WTC11 (cell line): ENCODE measurements at regions of chr15 and their contacts with region 1.

Region 1: DNA sequence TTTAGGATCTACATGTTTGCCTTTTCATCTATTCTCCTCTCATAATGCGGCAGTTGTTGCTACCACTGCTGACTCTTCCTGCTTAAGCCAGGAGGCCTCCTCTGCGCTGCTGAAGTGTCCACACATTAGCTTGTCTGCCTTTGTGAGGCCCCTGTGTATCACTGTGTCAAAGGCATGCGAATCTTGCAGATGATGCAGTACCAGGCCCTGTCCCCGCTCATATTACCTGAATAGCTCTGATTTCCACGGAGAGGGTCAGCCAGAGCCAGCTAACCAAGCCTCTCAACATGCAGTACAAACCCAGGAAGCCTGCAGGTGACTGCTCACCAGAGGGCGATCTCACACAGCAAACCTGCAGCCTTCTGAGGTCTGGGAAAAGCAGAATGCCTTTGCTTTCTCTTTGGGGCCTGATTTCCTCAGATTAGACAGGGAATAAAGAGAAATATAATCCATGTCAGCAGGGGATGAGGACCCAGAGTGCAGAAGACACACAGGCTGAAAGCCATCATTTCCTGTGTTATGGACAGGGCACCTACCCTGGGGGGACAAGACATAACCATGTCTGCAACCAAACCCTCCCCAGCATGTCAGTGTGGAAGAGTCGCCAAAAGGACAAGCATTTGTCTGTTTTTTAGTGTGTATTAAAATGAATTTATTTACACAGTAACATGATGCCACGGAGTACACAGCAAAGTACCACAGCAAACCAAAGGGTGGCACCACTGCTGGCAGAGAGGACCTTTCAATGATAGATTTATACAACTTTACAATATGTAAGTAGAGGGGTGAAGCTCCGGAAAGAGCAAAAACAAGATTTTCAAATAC is 36.8 kb upstream of the TSPAN3 start:
- DNase-seq: peak; percentile 79
- ATAC-seq: peak; percentile 94
- H3K4me3 Mint-ChIP-seq: no peak overlapping the region
- H3K27ac Mint-ChIP-seq: peak overlapping the region; percentile 95
- H3K4me1 Mint-ChIP-seq: peaks cover 10% of the 10 kb centered on the region
- H3K27me3 Mint-ChIP-seq: no peaks in the 10 kb centered on the region
- CTCF ChIP-seq: peak; percentile 59

Region 2: DNA sequence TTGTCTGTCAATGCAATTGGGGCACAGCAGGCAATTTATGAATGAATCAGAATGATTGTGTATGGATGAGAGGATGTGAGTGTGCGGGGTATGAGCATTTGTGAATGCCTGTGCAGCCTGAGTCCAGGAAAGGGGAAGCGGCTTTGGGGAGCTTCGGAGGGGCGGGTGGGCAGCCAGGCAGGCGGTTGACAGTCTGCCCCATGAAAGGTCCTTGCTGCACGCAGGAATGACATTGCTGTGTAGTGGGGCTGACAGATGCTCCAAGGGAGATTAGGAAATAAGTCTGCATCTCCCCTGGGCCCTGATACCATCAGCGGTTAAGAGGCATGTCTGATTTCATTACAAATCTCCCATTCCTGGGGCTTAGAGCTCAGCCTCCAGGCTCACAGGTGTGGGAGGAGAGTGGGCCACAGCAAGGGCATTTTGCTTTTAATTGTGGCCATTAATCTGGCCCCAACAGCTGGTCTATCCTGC is 10.5 kb before region 1 on chr15:
- CTCF ChIA-PET with region 1: interaction called, 11 read pairs
- POLR2A ChIA-PET with region 1: no interaction called
- DNase-seq: no peak
- ATAC-seq: no peak
- H3K4me3 Mint-ChIP-seq: no peak overlapping the region
- H3K27ac Mint-ChIP-seq: no peak overlapping the region
- H3K4me1 Mint-ChIP-seq: peaks cover 6% of the 10 kb centered on the region; the same call in 1 of the 2 replicates
- H3K27me3 Mint-ChIP-seq: no peaks in the 10 kb centered on the region
- CTCF ChIP-seq: no peak

Region 3: GRCh38 chr15:77118882-77119321 is 11.2 kb after region 1 on chr15:
- CTCF ChIA-PET with region 1: interaction called, 33 read pairs
- POLR2A ChIA-PET with region 1: no interaction called
- DNase-seq: no peak
- ATAC-seq: peak; percentile 68
- H3K4me3 Mint-ChIP-seq: no peak overlapping the region
- H3K27ac Mint-ChIP-seq: no peak overlapping the region
- H3K4me1 Mint-ChIP-seq: peaks cover 28% of the 10 kb centered on the region
- H3K27me3 Mint-ChIP-seq: no peaks in the 10 kb centered on the region
- CTCF ChIP-seq: peak; percentile 35

Region 4: GRCh38 chr15:77346245-77347036 is 238.7 kb after region 1 on chr15:
- CTCF ChIA-PET with region 1: no interaction called
- POLR2A ChIA-PET with region 1: no interaction called
- DNase-seq: no peak
- ATAC-seq: no peak
- H3K4me3 Mint-ChIP-seq: no peak overlapping the region
- H3K27ac Mint-ChIP-seq: no peak overlapping the region
- H3K4me1 Mint-ChIP-seq: peaks cover 13% of the 10 kb centered on the region
- H3K27me3 Mint-ChIP-seq: no peaks in the 10 kb centered on the region
- CTCF ChIP-seq: no peak